Aorta (tissue), 5 donors: ENCODE measurements at regions of chr2 and their contacts with region 1.

Region 1: GRCh38 chr2:152477347-152478092 is 142.5 kb downstream of the FMNL2 start:
- DNase-seq: no peak
- ATAC-seq: no peak
- H3K4me3 ChIP-seq: no peak overlapping the region
- H3K27ac ChIP-seq: no peak overlapping the region
- H3K4me1 ChIP-seq: peaks cover 2 to 5% of the 10 kb centered on the region in 2 donors
- H3K27me3 ChIP-seq: no peaks in the 10 kb centered on the region

Region 2: GRCh38 chr2:152537081-152537651 is 59.6 kb after region 1 on chr2:
- intact Hi-C with region 1: loop called in 1 of 2 experiments (anchors 10 kb)
- DNase-seq: no peak
- ATAC-seq: no peak
- H3K4me3 ChIP-seq: no peak overlapping the region
- H3K27ac ChIP-seq: no peak overlapping the region
- H3K4me1 ChIP-seq: peaks cover 0 to 15% of the 10 kb centered on the region in 2 donors
- H3K27me3 ChIP-seq: no peaks in the 10 kb centered on the region